SK-N-SH (cell line): ENCODE measurements at regions of chr12 and their contacts with region 1.

Region 1: DNA sequence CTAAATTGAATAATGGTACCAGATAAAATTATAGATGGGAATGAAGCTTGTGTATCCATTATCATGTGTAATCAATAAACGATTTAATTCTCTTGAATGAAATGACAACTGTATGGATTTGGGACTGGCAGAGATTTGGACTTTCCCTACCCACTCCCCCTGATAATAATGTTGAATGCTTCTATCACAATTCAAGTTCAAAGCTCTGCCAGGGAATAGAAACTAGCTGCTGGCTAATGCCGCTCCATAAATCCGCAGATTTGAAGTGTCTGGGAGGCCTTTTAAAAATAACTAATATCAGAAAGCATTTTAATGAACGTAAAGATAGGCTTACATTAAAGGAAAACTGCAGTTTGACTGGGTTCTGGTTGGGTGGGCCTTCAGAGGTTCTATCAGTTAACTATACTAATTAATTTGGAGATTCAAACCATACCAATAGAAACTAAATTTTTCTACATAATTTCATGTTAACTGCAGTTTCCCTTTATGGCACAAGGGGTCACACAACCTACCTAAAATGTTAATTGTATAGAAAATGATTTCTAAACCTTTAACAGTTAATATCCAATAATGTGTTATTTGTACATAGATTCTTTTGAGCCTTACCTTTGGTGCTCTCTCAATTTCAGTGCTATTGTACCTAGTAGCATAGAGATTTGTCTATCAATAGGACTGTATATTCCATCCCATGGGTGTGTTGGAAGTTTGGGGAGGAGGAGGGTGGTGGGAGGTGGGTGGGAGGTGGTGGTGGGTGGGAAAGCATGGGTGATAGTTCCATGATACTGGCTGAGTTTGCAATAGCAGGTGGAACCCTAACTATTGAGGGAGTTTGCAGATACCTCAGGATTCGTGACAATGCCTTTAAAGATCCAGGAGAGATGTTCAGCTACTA is 4.9 kb downstream of the HNRNPA1 start:
- DNase-seq: no peak
- H3K4me3 ChIP-seq: peak overlapping the region; percentile 24 to 80; a peak in 3 of 4 replicates
- H3K27ac ChIP-seq: peak overlapping the region; percentile 21 to 36; a peak in 3 of 4 replicates
- H3K4me1 ChIP-seq: peaks cover 13 to 25% of the 10 kb centered on the region in 2 experiments; a peak in 3 of 4 replicates
- H3K27me3 ChIP-seq: no peaks in the 10 kb centered on the region
- CTCF ChIP-seq: peak; percentile 54
- EP300 ChIP-seq: no peak
- RAD21 ChIP-seq: peak; percentile 17; the same call in 1 of the 2 replicates

Region 2: GRCh38 chr12:54300732-54301427 is 15.5 kb after region 1 on chr12 and contains the start of gene NFE2:
- CTCF ChIA-PET with region 1: interaction called, 29 read pairs
- POLR2A ChIA-PET with region 1: interaction called, 6 read pairs
- DNase-seq: peak; percentile 49
- H3K4me3 ChIP-seq: peak within 1 kb of the TSS in 1 of 2 experiments; percentile 14; a peak in 1 of 4 replicates
- H3K27ac ChIP-seq: no peak within 1 kb of the TSS
- H3K4me1 ChIP-seq: peaks cover 0 to 10% of the 10 kb centered on the region in 2 experiments; a peak in 1 of 4 replicates
- H3K27me3 ChIP-seq: no peaks in the 10 kb centered on the region; the same call in 1 of the 2 replicates
- CTCF ChIP-seq: no peak
- EP300 ChIP-seq: no peak
- RAD21 ChIP-seq: no peak
- polyA plus RNA-seq, gene NFE2: 0.16 and 0.25 TPM in 2 replicates